ENCODE measurements at regions of chr4 and their contacts with region 1.

Region 1: GRCh38 chr4:186472948-186473347 is 82.4 kb downstream of the MTNR1A start:
- DNase-seq: peak; percentile 47
- H3K4me3 ChIP-seq: no peak overlapping the region
- H3K27ac ChIP-seq: no peak overlapping the region
- H3K4me1 ChIP-seq: no peaks in the 10 kb centered on the region
- H3K27me3 ChIP-seq: no peaks in the 10 kb centered on the region

Region 2: GRCh38 chr4:185600801-185601434 is 872.0 kb before region 1 on chr4:
- in situ Hi-C with region 1: no loop called
- DNase-seq: no peak
- H3K4me3 ChIP-seq: no peak overlapping the region
- H3K27ac ChIP-seq: no peak overlapping the region
- H3K4me1 ChIP-seq: no peaks in the 10 kb centered on the region
- H3K27me3 ChIP-seq: peaks cover 3% of the 10 kb centered on the region; the same call in 1 of the 2 replicates

Region 3: DNA sequence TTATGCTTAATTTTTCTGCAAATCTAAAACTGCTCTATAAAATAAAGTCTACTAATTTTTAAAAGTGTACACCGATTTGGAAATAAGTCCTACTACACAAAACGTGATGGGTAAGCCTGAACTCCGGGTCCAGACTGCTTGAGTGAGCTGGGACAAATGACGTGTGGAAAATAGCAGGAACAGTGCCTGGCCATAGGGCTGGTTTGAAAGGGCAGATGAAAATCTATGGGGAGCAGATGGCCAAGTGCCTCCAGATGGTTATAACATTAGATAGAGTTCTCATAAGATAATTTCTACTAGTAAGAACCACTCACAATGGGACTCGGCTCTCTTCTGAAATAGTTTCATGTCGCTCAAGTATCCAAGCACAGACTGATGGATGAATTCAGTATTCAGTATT is 154.5 kb before region 1 on chr4:
- in situ Hi-C with region 1: no loop called
- DNase-seq: no peak
- H3K4me3 ChIP-seq: no peak overlapping the region
- H3K27ac ChIP-seq: no peak overlapping the region
- H3K4me1 ChIP-seq: no peaks in the 10 kb centered on the region
- H3K27me3 ChIP-seq: no peaks in the 10 kb centered on the region

Region 4: GRCh38 chr4:186570193-186570996 is 97.4 kb after region 1 on chr4:
- in situ Hi-C with region 1: loop called (anchors 10 kb)
- DNase-seq: peak; percentile 59
- H3K4me3 ChIP-seq: peak overlapping the region; percentile 51
- H3K27ac ChIP-seq: no peak overlapping the region
- H3K4me1 ChIP-seq: no peaks in the 10 kb centered on the region
- H3K27me3 ChIP-seq: no peaks in the 10 kb centered on the region

Region 5: GRCh38 chr4:186881521-186882220 is 408.7 kb after region 1 on chr4:
- in situ Hi-C with region 1: no loop called
- DNase-seq: peak; percentile 70
- H3K4me3 ChIP-seq: no peak overlapping the region
- H3K27ac ChIP-seq: no peak overlapping the region
- H3K4me1 ChIP-seq: peaks cover 17% of the 10 kb centered on the region
- H3K27me3 ChIP-seq: no peaks in the 10 kb centered on the region